Activated naive CD4-positive, alpha-beta T cell treated with anti-CD3 and anti-CD28 coated beads for 36 hours (primary cell): ENCODE measurements at regions of chr10 and their contacts with region 1.

Region 1: GRCh38 chr10:69004821-69005220 is 16.2 kb downstream of the KIFBP start:
- DNase-seq: no peak
- H3K4me3 Mint-ChIP-seq: no peak overlapping the region
- H3K27ac Mint-ChIP-seq: no peak overlapping the region
- H3K4me1 Mint-ChIP-seq: peaks cover 6% of the 10 kb centered on the region
- H3K27me3 Mint-ChIP-seq: no peaks in the 10 kb centered on the region

Region 2: DNA sequence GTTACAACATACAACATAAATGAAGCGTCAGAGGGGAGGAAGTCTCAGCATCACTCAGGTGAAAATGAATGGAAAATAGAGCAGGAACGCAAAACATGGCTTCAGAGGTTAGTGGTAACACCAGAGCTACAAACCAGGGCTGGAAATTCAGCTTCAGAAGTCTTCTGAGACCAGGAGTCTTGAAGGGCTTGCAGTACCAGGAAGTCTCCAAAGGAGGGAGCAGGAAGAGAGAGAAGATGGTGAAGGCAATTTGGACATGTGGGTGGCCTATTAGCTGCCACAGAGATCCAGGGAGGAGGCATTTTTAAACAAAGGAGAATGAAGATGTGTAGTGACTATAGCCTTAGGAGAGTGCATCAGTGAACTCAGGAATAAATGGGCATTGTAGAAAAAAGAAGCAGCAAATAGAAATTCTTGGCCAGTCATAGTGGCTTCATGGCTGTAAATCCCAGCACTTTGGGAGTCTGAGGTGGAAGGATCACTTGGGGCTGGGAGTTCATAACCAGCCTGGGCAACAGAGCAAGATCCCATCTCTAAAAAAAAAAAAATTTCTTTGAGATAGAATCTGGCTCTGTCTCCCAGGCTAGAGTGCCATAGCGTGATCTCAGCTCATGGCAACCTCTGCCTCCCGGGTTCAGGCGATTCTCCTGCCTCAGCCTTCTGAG is 453.9 kb before region 1 on chr10:
- CTCF ChIA-PET with region 1: no interaction called
- intact Hi-C with region 1: no loop called
- DNase-seq: peak; percentile 69
- H3K4me3 Mint-ChIP-seq: no peak overlapping the region
- H3K27ac Mint-ChIP-seq: no peak overlapping the region
- H3K4me1 Mint-ChIP-seq: no peaks in the 10 kb centered on the region
- H3K27me3 Mint-ChIP-seq: no peaks in the 10 kb centered on the region

Region 3: GRCh38 chr10:69055241-69055640 is 50.4 kb after region 1 on chr10:
- CTCF ChIA-PET with region 1: interaction called, 10 read pairs
- intact Hi-C with region 1: loop called (anchors 2 kb)
- DNase-seq: no peak
- H3K4me3 Mint-ChIP-seq: no peak overlapping the region
- H3K27ac Mint-ChIP-seq: peak overlapping the region; percentile 52
- H3K4me1 Mint-ChIP-seq: peaks cover 44% of the 10 kb centered on the region
- H3K27me3 Mint-ChIP-seq: no peaks in the 10 kb centered on the region

Region 4: GRCh38 chr10:69092959-69093850 is 88.4 kb after region 1 on chr10:
- CTCF ChIA-PET with region 1: interaction called, 143 read pairs
- intact Hi-C with region 1: loop called (anchors 1 kb)
- DNase-seq: peak; percentile 95
- H3K4me3 Mint-ChIP-seq: peak overlapping the region; percentile 32
- H3K27ac Mint-ChIP-seq: peak overlapping the region; percentile 81
- H3K4me1 Mint-ChIP-seq: peaks cover 52% of the 10 kb centered on the region
- H3K27me3 Mint-ChIP-seq: no peaks in the 10 kb centered on the region

Region 5: DNA sequence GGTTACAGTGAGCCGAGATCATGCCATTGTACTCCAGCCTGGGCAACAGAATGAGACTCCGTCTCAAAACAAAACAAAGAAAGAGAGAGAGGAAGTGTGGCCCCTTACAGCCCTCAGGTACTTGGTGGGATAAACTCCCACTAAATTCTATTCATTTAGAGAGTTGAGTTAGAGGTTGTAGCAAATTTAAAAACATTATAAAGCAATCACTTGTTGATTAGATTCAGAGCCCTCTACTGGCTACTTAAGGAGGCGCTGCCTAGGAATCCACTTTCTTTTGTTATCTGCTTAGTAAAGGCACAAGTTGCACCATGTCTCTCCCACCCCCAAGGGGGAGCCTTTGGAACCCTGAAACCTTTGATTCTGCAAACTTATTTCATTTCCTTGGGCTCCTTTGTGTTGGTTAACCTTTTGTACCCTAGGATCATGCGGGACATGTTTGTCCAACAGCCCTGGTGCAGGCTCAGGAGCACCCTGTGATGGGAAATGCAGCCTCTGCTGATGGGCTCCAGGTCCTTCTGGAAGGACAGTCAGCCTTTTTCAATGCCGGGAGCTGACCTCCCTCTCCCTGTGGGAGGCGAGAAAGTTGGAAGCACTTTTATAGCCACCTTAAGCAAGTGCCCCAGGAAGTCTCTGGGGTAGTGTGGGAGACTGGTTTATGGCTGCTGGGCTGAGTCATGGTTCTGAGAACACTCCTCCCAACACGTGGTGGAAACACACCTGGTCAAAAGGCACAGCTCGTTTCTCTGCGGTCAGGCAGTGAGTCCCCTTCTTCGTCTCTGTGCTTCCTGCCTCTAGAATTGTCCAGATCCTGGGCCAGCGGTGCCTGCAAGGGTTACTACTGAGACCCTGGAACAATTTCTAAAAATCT is 217.6 kb after region 1 on chr10:
- CTCF ChIA-PET with region 1: interaction called, 4 read pairs
- intact Hi-C with region 1: loop called (anchors 2 kb)
- DNase-seq: peak; percentile 93
- H3K4me3 Mint-ChIP-seq: peak overlapping the region; percentile 60
- H3K27ac Mint-ChIP-seq: peak overlapping the region; percentile 85
- H3K4me1 Mint-ChIP-seq: peaks cover 23% of the 10 kb centered on the region
- H3K27me3 Mint-ChIP-seq: no peaks in the 10 kb centered on the region

Region 6: DNA sequence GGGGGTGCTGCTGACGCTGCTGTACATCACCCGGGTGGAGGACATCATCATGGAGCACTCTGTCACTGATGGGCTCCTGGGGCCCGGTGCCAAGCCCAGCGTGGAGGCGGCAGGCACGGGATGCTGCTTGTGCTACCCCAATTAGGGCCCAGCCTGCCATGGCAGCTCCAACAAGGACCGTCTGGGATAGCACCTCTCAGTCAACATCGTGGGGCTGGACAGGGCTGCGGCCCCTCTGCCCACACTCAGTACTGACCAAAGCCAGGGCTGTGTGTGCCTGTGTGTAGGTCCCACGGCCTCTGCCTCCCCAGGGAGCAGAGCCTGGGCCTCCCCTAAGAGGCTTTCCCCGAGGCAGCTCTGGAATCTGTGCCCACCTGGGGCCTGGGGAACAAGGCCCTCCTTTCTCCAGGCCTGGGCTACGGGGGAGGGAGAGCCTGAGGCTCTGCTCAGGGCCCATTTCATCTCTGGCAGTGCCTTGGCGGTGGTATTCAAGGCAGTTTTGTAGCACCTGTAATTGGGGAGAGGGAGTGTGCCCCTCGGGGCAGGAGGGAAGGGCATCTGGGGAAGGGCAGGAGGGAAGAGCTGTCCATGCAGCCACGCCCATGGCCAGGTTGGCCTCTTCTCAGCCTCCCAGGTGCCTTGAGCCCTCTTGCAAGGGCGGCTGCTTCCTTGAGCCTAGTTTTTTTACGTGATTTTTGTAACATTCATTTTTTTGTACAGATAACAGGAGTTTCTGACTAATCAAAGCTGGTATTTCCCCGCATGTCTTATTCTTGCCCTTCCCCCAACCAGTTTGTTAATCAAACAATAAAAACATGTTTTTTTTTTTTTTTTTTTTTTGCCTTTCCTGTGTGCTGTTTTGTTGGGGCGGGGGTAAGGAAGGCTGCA is 502.3 kb after region 1 on chr10:
- CTCF ChIA-PET with region 1: interaction called, 6 read pairs
- intact Hi-C with region 1: loop called (anchors 5 kb)
- DNase-seq: no peak
- H3K4me3 Mint-ChIP-seq: peak overlapping the region; percentile 66
- H3K27ac Mint-ChIP-seq: peak overlapping the region; percentile 34
- H3K4me1 Mint-ChIP-seq: peaks cover 10% of the 10 kb centered on the region
- H3K27me3 Mint-ChIP-seq: no peaks in the 10 kb centered on the region

Region 7: DNA sequence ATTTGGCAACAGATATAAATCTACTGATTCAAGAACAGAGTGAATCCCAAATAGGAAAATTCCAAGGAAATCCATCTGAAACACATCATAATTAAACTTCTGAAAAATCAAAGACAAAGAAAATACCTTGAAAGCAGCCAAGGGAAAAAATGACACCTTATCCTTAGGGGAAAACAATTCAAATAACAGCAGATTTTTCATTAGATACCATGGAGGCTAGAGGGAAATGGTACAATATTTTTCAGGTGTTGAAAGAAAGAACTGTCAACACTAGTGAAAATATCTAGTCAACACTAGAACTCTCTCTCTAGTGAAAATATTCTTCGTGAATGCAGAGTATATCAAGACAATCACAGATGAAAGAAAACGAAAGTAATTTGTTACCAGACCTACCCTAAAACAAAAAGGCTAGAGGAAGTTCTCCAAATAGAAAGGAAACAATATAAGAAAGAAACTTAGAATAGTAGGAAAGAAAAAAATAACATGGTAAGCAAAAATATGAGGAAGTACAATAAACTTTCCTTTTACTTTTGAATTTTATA is 619.5 kb after region 1 on chr10:
- CTCF ChIA-PET with region 1: no interaction called
- intact Hi-C with region 1: no loop called
- DNase-seq: no peak
- H3K4me3 Mint-ChIP-seq: no peak overlapping the region
- H3K27ac Mint-ChIP-seq: no peak overlapping the region
- H3K4me1 Mint-ChIP-seq: peaks cover 30% of the 10 kb centered on the region
- H3K27me3 Mint-ChIP-seq: no peaks in the 10 kb centered on the region